Panc1 (cell line): ENCODE measurements at regions of chr7 and their contacts with region 1.

Region 1: GRCh38 chr7:51102828-51103227 is 213.8 kb downstream of the COBL start:
- DNase-seq: no peak
- ATAC-seq: no peak
- H3K4me3 ChIP-seq: no peak overlapping the region
- H3K27ac ChIP-seq: no peak overlapping the region
- H3K4me1 ChIP-seq: no peaks in the 10 kb centered on the region
- H3K27me3 ChIP-seq: peaks cover 5% of the 10 kb centered on the region
- CTCF ChIP-seq: no peak

Region 2: DNA sequence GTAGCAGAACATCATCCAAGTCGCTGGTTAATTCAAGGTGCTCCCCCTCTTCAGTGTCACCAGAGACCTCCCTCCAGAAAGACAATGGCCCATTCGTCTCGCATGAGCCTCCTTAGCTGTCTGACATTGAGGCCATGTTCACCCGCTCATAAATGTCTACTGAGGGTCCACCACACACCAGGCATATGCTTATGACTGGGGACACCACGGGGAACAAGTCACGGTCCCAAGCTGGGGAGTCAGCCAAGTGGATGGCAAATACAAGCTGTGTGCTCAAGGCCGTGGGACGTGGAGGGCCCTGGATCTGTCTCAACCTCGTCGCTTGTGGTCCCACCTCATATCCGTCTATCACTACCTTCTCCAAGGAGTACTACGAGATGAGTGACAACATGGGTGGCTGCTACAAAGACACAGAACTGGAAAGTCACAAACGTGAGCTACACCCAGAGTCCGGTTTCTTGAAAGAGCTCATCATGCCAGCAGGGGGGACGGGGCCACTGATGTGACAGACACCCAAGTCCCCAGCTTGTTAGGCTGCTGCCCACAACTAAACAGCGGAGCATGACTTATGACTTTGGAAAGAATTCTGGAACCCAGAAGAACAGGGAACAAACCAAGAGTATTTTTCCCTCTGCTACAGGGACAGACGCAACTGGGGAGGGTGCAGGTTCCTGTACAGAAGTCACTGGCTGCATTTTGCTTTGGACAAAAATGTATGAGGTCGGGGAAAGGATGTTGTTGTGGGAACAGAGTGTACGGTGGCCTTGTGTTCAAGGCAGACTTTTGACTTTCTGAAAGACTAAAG is 24.2 kb after region 1 on chr7:
- CTCF ChIA-PET with region 1: no interaction called
- POLR2A ChIA-PET with region 1: interaction called, 10 read pairs
- in situ Hi-C with region 1: no loop called
- intact Hi-C with region 1: no loop called
- DNase-seq: no peak
- ATAC-seq: no peak
- H3K4me3 ChIP-seq: no peak overlapping the region
- H3K27ac ChIP-seq: no peak overlapping the region
- H3K4me1 ChIP-seq: no peaks in the 10 kb centered on the region
- H3K27me3 ChIP-seq: no peaks in the 10 kb centered on the region; the same call in 1 of the 2 replicates
- CTCF ChIP-seq: no peak